ENCODE measurements at regions of chr5 and their contacts with region 1.

Region 1: DNA sequence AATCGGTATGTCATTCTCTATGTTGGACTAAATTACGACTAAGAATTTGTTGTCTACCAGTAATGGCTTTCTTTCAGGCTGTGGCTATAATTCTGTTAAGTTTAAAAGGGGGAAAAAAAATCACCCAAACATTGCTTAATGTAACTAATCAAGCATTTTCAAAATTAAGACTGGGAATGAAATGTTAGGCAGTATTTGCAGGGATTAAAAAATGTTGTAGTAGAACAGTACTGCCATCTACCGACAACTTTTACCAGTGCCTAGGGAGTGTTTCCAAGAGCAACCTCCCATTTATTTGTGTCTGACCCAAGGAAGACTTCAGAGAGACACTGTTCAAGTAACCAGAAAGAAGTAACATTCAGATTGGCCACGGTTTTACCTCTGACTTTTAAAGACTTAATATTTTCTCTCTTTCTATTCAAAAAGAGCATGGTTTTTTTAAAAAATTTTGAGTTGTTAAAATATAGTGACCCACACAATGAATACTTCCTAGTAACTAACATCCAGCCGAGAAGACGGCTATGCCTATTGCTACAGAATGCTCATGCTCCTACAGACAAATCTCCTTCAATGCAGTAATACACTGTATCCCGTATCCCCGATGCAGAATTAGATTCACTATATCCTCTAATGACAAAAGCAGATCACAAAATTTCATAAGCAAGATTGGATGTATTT is 92.4 kb downstream of the ARL15 start:
- DNase-seq: no peak
- H3K4me3 Mint-ChIP-seq: no peak overlapping the region
- H3K27ac Mint-ChIP-seq: no peak overlapping the region
- H3K4me1 Mint-ChIP-seq: no peaks in the 10 kb centered on the region
- H3K27me3 Mint-ChIP-seq: no peaks in the 10 kb centered on the region

Region 2: DNA sequence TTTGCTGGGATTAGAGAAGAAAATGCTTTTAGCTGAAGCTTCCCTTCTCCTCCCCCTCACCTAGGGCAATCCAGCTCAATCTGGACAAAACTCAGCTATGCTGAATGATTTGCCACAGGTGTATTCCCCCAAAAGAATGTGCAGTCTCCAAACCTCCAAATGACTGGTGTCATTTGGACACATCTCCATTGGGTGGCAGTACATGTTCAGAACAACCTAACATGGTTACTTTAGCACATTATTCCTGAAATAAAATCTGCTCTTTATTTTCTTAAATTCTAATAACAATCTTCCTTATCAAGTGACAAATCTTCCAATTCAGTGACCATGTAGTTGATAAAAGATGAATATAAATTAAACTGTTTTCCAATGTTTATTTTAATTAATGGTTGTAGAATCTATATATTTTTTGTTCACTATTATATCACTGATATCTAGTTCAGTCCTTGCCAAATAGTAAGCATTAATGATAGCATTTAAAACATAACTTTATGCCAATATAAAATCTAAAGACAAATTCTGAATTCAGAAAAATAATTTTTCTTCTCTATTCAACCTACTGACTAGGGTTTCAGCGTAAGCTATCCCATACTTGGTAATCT is 1047.1 kb before region 1 on chr5:
- intact Hi-C with region 1: loop called (anchors 5 kb)
- DNase-seq: no peak
- H3K4me3 Mint-ChIP-seq: no peak overlapping the region
- H3K27ac Mint-ChIP-seq: no peak overlapping the region
- H3K4me1 Mint-ChIP-seq: no peaks in the 10 kb centered on the region
- H3K27me3 Mint-ChIP-seq: peaks cover 25% of the 10 kb centered on the region

Region 3: GRCh38 chr5:54249210-54250028 is 31.5 kb after region 1 on chr5:
- intact Hi-C with region 1: no loop called
- DNase-seq: no peak
- H3K4me3 Mint-ChIP-seq: no peak overlapping the region
- H3K27ac Mint-ChIP-seq: no peak overlapping the region
- H3K4me1 Mint-ChIP-seq: no peaks in the 10 kb centered on the region
- H3K27me3 Mint-ChIP-seq: peaks cover 10% of the 10 kb centered on the region